Naive thymus-derived CD4-positive, alpha-beta T cell (primary cell): ENCODE measurements at regions of chr1 and their contacts with region 1.

Region 1: GRCh38 chr1:235253219-235253962 is 74.6 kb downstream of the ARID4B start:
- DNase-seq: peak; percentile 27 to 70 (median 63)
- ATAC-seq: peak; percentile 96
- H3K4me3 ChIP-seq: no peak overlapping the region
- H3K4me3 Mint-ChIP-seq: no peak overlapping the region
- H3K27ac ChIP-seq: no peak overlapping the region
- H3K27ac Mint-ChIP-seq: peak overlapping the region in 5 of 9 donors; percentile 16 to 65 (median 23)
- H3K4me1 ChIP-seq: peaks cover 0 to 5% of the 10 kb centered on the region in 2 donors
- H3K4me1 Mint-ChIP-seq: peaks cover 13 to 51% (median 41%) of the 10 kb centered on the region in 7 donors
- H3K27me3 ChIP-seq: no peaks in the 10 kb centered on the region
- H3K27me3 Mint-ChIP-seq: no peaks in the 10 kb centered on the region

Region 2: DNA sequence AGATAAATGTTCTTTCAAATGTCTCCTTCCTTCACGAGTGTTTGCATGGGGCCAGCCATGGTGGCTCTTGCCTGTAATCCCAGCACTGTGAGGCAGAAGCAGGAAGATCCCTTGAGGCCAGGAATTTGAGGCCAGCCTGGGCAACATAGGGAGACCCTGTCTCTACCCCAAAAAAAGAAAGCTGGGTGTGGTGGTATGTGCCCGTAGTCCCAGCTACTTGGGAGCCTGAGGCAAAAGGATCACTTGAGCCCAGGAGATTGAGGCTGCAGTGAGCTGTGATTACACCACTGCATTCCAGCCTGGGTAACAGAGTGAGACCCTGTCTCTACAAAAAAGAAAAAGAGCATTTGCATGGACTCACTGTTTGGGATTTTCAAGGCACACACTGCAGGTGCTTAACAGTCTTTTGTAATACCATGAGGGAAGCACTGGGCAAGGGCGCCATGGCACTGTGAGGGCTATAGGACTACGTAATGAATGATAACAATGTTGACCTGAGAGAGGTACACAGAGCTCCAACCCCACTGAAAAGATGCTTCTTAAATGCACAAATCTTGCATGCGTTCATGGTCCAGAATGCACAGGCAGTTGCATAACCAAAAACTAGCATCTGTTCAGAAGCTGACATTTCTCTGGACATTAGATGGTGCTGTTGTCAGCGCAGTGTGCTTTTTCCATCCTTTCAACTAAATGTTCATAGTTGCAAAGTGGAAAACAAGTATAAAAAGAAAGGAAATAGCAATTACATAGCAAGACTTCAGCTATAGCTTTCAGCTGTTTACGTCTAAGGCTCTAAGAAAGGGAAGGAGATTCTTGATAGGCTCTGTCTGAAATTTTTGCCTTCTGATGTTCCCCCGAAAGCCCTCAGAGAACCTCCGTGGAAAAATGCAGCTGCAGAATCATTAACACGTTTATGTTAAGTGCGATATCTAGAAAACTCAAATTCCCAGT is 766.6 kb before region 1 on chr1:
- CTCF ChIA-PET with region 1: no interaction called
- POLR2A ChIA-PET with region 1: no interaction called
- intact Hi-C with region 1: loop called in 1 of 2 experiments (anchors 5 kb)
- DNase-seq: peak in 6 of 9 donors; percentile 17 to 60 (median 44)
- ATAC-seq: peak; percentile 80
- H3K4me3 ChIP-seq: no peak overlapping the region
- H3K4me3 Mint-ChIP-seq: peak overlapping the region in 9 of 10 donors; percentile 10 to 74 (median 57)
- H3K27ac ChIP-seq: no peak overlapping the region
- H3K27ac Mint-ChIP-seq: peak overlapping the region; percentile 18 to 85 (median 79)
- H3K4me1 ChIP-seq: peaks cover 0 to 20% of the 10 kb centered on the region in 2 donors
- H3K4me1 Mint-ChIP-seq: peaks cover 20 to 42% (median 35%) of the 10 kb centered on the region in 7 donors
- H3K27me3 ChIP-seq: no peaks in the 10 kb centered on the region
- H3K27me3 Mint-ChIP-seq: peaks cover 0 to 22% (median 6%) of the 10 kb centered on the region in 5 donors

Region 3: GRCh38 chr1:235100194-235100772 is 153.1 kb before region 1 on chr1:
- CTCF ChIA-PET with region 1: no interaction called
- POLR2A ChIA-PET with region 1: no interaction called
- intact Hi-C with region 1: loop called (anchors 5 to 10 kb)
- DNase-seq: peak in 1 of 9 donors; percentile 4
- ATAC-seq: no peak
- H3K4me3 ChIP-seq: no peak overlapping the region
- H3K4me3 Mint-ChIP-seq: no peak overlapping the region
- H3K27ac ChIP-seq: no peak overlapping the region
- H3K27ac Mint-ChIP-seq: no peak overlapping the region
- H3K4me1 ChIP-seq: peaks cover 16 to 21% of the 10 kb centered on the region in 2 donors
- H3K4me1 Mint-ChIP-seq: peaks cover 20 to 38% (median 33%) of the 10 kb centered on the region in 7 donors
- H3K27me3 ChIP-seq: no peaks in the 10 kb centered on the region
- H3K27me3 Mint-ChIP-seq: peaks cover 0 to 5% (median 0%) of the 10 kb centered on the region in 5 donors

Region 4: GRCh38 chr1:235266325-235266724 is 12.9 kb after region 1 on chr1:
- CTCF ChIA-PET with region 1: interaction called, 3 read pairs
- POLR2A ChIA-PET with region 1: interaction called, 6 read pairs
- intact Hi-C with region 1: loop called in 1 of 2 experiments (anchors 1 kb)
- DNase-seq: no peak
- ATAC-seq: no peak
- H3K4me3 ChIP-seq: no peak overlapping the region
- H3K4me3 Mint-ChIP-seq: peak overlapping the region in 4 of 10 donors; percentile 22 to 40 (median 26)
- H3K27ac ChIP-seq: peak overlapping the region; percentile 9
- H3K27ac Mint-ChIP-seq: peak overlapping the region in 7 of 9 donors; percentile 22 to 75 (median 35)
- H3K4me1 ChIP-seq: peaks cover 25% of the 10 kb centered on the region in 2 donors
- H3K4me1 Mint-ChIP-seq: peaks cover 30 to 89% (median 80%) of the 10 kb centered on the region in 7 donors
- H3K27me3 ChIP-seq: no peaks in the 10 kb centered on the region
- H3K27me3 Mint-ChIP-seq: no peaks in the 10 kb centered on the region

Region 5: GRCh38 chr1:235295902-235296376 is 42.5 kb after region 1 on chr1:
- CTCF ChIA-PET with region 1: interaction called, 4 read pairs
- POLR2A ChIA-PET with region 1: no interaction called
- intact Hi-C with region 1: loop called in 1 of 2 experiments (anchors 2 kb)
- DNase-seq: no peak
- ATAC-seq: no peak
- H3K4me3 ChIP-seq: no peak overlapping the region
- H3K4me3 Mint-ChIP-seq: peak overlapping the region in 9 of 10 donors; percentile 4 to 81 (median 60)
- H3K27ac ChIP-seq: no peak overlapping the region
- H3K27ac Mint-ChIP-seq: peak overlapping the region; percentile 41 to 92 (median 79)
- H3K4me1 ChIP-seq: peaks cover 38 to 47% of the 10 kb centered on the region in 2 donors
- H3K4me1 Mint-ChIP-seq: peaks cover 33 to 77% (median 65%) of the 10 kb centered on the region in 7 donors
- H3K27me3 ChIP-seq: no peaks in the 10 kb centered on the region
- H3K27me3 Mint-ChIP-seq: no peaks in the 10 kb centered on the region

Region 6: DNA sequence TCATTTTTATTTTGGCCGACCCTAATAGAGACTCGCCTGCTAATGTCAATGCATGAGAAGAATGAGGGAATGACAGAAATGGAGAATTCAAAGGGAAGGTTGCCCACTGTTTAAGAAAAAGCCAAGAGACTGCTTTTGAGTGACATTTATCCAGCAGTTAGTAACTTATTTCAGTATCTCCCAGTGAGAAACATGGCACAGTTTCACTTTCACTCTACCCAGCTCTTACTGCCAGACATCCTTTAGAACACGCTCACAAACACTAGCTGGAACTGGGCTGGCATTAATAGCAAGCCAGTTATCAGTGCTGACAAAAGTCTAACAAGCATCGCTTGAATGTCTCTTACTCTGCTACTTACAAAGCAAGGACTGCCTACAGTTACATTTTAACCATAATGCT is 83.5 kb after region 1 on chr1:
- CTCF ChIA-PET with region 1: interaction called, 3 read pairs
- POLR2A ChIA-PET with region 1: interaction called, 3 read pairs
- intact Hi-C with region 1: loop called in 1 of 2 experiments (anchors 1 kb)
- DNase-seq: peak in 7 of 9 donors; percentile 18 to 58 (median 40)
- ATAC-seq: peak; percentile 84
- H3K4me3 ChIP-seq: peak overlapping the region; percentile 17
- H3K4me3 Mint-ChIP-seq: peak overlapping the region; percentile 34 to 78 (median 72)
- H3K27ac ChIP-seq: peak overlapping the region; percentile 59
- H3K27ac Mint-ChIP-seq: peak overlapping the region; percentile 57 to 93 (median 85)
- H3K4me1 ChIP-seq: peaks cover 10 to 23% of the 10 kb centered on the region in 2 donors
- H3K4me1 Mint-ChIP-seq: peaks cover 15 to 40% (median 24%) of the 10 kb centered on the region in 7 donors
- H3K27me3 ChIP-seq: no peaks in the 10 kb centered on the region
- H3K27me3 Mint-ChIP-seq: no peaks in the 10 kb centered on the region

Region 7: GRCh38 chr1:235367000-235367908 is 113.9 kb after region 1 on chr1 and contains the start of gene TBCE:
- CTCF ChIA-PET with region 1: interaction called, 5 read pairs
- POLR2A ChIA-PET with region 1: no interaction called
- intact Hi-C with region 1: loop called in 1 of 2 experiments (anchors 2 kb)
- DNase-seq: peak; percentile 61 to 89 (median 63)
- ATAC-seq: peak; percentile 99
- H3K4me3 ChIP-seq: peak within 1 kb of the TSS; percentile 90
- H3K4me3 Mint-ChIP-seq: peak within 1 kb of the TSS; percentile 91 to 99 (median 98)
- H3K27ac ChIP-seq: peak within 1 kb of the TSS; percentile 74
- H3K27ac Mint-ChIP-seq: peak within 1 kb of the TSS; percentile 86 to 97 (median 93)
- H3K4me1 ChIP-seq: peaks cover 0 to 11% of the 10 kb centered on the region in 2 donors
- H3K4me1 Mint-ChIP-seq: peaks cover 13 to 41% (median 38%) of the 10 kb centered on the region in 7 donors
- H3K27me3 ChIP-seq: no peaks in the 10 kb centered on the region
- H3K27me3 Mint-ChIP-seq: no peaks in the 10 kb centered on the region
- total RNA-seq, gene TBCE: 16.8 to 26.1 (median 20.6) TPM

Region 8: DNA sequence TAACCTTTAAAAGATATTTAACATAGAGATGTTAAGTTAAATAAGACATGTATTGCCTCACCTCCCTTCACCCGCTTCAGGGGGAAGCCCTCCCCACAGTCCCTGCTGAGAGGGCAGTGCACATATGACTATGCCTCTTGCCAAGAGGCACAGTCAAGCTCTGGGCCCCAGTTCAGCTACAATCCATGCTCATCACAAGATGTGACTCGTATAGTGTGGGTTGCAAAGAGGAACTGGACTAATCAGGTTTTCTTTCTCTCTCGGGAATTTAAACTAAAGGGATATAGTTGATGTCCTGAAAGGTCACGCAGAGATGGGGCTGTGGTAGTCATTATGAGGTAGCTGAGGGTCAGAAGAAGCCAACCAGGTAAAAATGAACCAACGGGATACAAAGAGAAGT is 577.8 kb after region 1 on chr1:
- CTCF ChIA-PET with region 1: no interaction called
- POLR2A ChIA-PET with region 1: no interaction called
- intact Hi-C with region 1: no loop called
- DNase-seq: peak in 1 of 9 donors; percentile 38
- ATAC-seq: peak; percentile 92
- H3K4me3 ChIP-seq: no peak overlapping the region
- H3K4me3 Mint-ChIP-seq: peak overlapping the region in 1 of 10 donors; percentile 3
- H3K27ac ChIP-seq: no peak overlapping the region
- H3K27ac Mint-ChIP-seq: peak overlapping the region in 1 of 9 donors; percentile 26
- H3K4me1 ChIP-seq: no peaks in the 10 kb centered on the region
- H3K4me1 Mint-ChIP-seq: peaks cover 0 to 11% (median 0%) of the 10 kb centered on the region in 7 donors
- H3K27me3 ChIP-seq: no peaks in the 10 kb centered on the region
- H3K27me3 Mint-ChIP-seq: no peaks in the 10 kb centered on the region